Prostate gland (tissue), 2 donors: ENCODE measurements at regions of chr22 and their contacts with region 1.

Region 1: DNA sequence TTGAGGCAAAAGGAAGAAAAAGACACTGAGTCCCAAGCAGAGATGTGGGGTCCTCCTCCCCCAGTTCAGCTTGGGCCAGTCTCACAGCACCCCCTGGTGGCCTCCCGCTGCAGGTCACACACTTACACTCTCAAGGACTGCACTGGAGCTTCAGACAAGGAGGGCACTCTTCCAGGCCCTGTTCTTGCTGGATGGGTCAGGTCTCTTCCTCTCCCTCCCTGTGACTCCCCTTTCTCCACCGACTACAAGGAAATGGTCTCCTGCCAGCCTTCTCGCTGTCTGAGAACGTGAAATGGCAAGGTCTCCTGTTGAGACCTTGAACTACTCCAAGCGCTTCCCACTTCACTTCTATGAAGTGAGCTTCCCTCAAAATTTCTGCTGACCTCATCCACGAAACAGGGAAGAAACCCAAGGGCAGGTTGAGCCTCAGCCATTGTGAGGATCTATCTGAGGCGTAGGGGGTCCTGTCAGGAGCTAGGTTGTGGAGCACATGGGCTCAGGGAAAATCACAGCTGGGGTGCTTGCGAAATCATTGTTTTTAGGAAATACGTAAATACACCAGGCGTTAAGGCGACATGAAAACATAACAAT is 11.2 kb upstream of the IGLL1 start:
- DNase-seq: peak; percentile 59
- H3K4me3 ChIP-seq: no peak overlapping the region
- H3K27ac ChIP-seq: no peak overlapping the region
- H3K4me1 ChIP-seq: no peaks in the 10 kb centered on the region
- H3K27me3 ChIP-seq: no peaks in the 10 kb centered on the region
- CTCF ChIP-seq: peak; percentile 58 to 79 (median 74)
- POLR2A ChIP-seq: no peak

Region 2: GRCh38 chr22:22357024-22357883 is 1234.0 kb before region 1 on chr22:
- intact Hi-C with region 1: no loop called
- DNase-seq: peak; percentile 36
- H3K4me3 ChIP-seq: no peak overlapping the region
- H3K27ac ChIP-seq: no peak overlapping the region
- H3K4me1 ChIP-seq: no peaks in the 10 kb centered on the region
- H3K27me3 ChIP-seq: no peaks in the 10 kb centered on the region
- CTCF ChIP-seq: peak; percentile 26 to 54 (median 50)
- POLR2A ChIP-seq: no peak

Region 3: GRCh38 chr22:23548501-23549197 is 42.6 kb before region 1 on chr22:
- intact Hi-C with region 1: loop called (anchors 5 kb)
- DNase-seq: no peak
- H3K4me3 ChIP-seq: no peak overlapping the region
- H3K27ac ChIP-seq: no peak overlapping the region
- H3K4me1 ChIP-seq: no peaks in the 10 kb centered on the region
- H3K27me3 ChIP-seq: no peaks in the 10 kb centered on the region
- CTCF ChIP-seq: no peak
- POLR2A ChIP-seq: no peak

Region 4: DNA sequence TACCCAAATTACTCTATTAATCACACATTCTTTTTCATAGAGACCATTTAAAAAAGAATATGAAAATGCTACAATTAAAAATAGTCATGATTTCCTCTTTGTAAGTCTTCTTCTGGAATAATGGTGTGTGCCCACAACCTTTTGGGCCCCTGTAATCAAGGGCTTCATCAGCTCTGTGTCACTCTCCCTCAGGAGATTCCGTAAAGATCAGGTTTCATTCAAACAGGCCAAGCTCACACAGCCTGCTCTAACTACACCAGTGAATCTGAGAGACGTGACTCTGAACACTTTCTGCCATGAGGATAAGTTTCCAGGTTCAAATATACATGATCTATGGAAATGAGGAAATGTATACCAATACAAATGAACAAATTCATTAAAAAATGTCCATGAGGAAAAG is 31.3 kb after region 1 on chr22:
- intact Hi-C with region 1: no loop called
- DNase-seq: no peak
- H3K4me3 ChIP-seq: no peak overlapping the region
- H3K27ac ChIP-seq: no peak overlapping the region
- H3K4me1 ChIP-seq: no peaks in the 10 kb centered on the region
- H3K27me3 ChIP-seq: no peaks in the 10 kb centered on the region
- CTCF ChIP-seq: no peak
- POLR2A ChIP-seq: no peak

Region 5: GRCh38 chr22:23709107-23709506 is 117.8 kb after region 1 on chr22:
- intact Hi-C with region 1: no loop called
- DNase-seq: no peak
- H3K4me3 ChIP-seq: no peak overlapping the region
- H3K27ac ChIP-seq: no peak overlapping the region
- H3K4me1 ChIP-seq: no peaks in the 10 kb centered on the region
- H3K27me3 ChIP-seq: no peaks in the 10 kb centered on the region
- CTCF ChIP-seq: no peak
- POLR2A ChIP-seq: no peak

Region 6: DNA sequence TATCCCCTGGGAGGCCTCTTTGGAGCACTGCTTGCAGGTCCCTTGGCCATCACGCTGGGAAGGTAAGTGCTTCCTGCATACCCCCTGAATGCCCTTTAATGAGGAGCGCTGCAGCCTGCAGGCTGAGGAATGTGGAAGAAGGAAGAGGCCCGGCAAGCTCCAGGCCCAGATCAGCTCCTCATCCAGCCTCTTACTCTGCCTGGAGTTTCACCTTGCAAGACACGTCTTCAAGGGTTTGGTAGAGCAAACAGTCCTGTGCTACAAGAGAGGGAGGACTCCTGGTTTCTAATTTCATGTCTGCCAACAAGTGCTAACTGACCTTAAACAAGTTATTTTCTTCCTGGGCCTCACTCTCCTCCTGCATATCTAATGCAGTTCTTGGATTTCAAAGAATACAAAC is 277.3 kb after region 1 on chr22:
- intact Hi-C with region 1: no loop called
- DNase-seq: no peak
- H3K4me3 ChIP-seq: no peak overlapping the region
- H3K27ac ChIP-seq: no peak overlapping the region
- H3K4me1 ChIP-seq: no peaks in the 10 kb centered on the region
- H3K27me3 ChIP-seq: no peaks in the 10 kb centered on the region
- CTCF ChIP-seq: no peak
- POLR2A ChIP-seq: no peak